ENCODE measurements at regions of chr2 and their contacts with region 1.

Region 1: GRCh38 chr2:11477994-11478393 is 12.0 kb upstream of the E2F6 start:
- DNase-seq: peak; percentile 93
- H3K4me3 Mint-ChIP-seq: no peak overlapping the region
- H3K27ac Mint-ChIP-seq: no peak overlapping the region
- H3K4me1 Mint-ChIP-seq: peaks cover 2% of the 10 kb centered on the region
- H3K27me3 Mint-ChIP-seq: peaks cover 27% of the 10 kb centered on the region
- CTCF ChIP-seq: peak; percentile 77

Region 2: DNA sequence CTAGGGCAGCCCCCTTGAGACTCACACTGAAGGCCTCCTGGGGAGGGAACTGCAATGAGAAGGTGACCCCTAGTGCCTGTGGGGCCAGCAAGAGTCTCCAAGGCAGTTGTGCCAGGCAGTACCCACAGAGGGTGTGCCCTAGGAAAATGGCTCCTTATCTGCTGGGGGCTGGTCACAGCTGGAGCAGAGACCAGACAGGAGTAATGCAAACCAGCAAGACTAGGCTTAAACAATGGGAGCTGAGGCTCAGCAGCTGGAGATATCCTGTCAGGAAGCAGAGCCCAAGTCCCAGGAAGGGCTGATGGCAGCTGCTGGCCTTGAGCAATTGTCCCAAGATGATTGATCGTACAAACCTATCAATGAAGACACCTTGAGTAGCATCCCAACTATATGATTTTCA is 14.7 kb after region 1 on chr2:
- CTCF ChIA-PET with region 1: interaction called, 12 read pairs
- POLR2A ChIA-PET with region 1: no interaction called
- intact Hi-C with region 1: no loop called
- DNase-seq: no peak
- H3K4me3 Mint-ChIP-seq: no peak overlapping the region
- H3K27ac Mint-ChIP-seq: no peak overlapping the region
- H3K4me1 Mint-ChIP-seq: no peaks in the 10 kb centered on the region
- H3K27me3 Mint-ChIP-seq: no peaks in the 10 kb centered on the region
- CTCF ChIP-seq: no peak

Region 3: DNA sequence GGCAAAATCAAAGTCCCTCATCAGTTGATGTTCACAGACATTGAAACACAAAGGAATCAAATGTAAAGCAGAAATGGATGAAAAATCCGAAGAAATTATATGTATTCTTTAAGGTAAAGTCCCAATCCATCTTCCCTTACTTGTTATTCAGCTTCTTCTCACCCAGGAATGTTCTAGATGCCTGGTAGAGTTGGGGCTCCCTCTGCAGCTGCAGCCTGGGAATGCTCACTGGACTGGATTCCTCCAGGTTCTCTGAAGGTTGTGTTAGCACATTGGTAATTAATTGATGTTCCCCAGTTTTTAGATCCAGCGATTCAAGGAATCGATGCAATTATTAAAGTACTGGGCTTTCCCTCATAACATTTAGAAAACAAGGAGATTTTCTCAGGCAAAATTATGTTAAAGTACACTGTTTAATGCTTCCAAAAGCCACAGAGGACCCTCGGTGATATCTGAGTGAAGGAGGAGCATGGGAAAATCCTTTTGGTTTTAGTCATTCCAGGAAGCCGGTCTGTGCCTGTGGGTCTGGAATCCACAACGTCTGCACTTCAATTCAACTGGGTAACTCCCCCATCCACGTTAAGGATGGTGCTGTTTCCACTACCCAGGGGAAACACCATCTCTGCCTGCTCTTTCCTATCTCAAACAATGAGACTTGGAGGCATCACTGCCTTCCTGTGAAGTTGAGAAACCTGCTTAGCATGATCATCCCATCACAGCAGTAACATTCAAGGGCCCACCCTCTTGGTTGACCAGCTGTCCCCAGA is 170.0 kb after region 1 on chr2:
- CTCF ChIA-PET with region 1: interaction called, 3 read pairs
- POLR2A ChIA-PET with region 1: no interaction called
- intact Hi-C with region 1: loop called (anchors 1 kb)
- DNase-seq: peak; percentile 27
- H3K4me3 Mint-ChIP-seq: no peak overlapping the region
- H3K27ac Mint-ChIP-seq: no peak overlapping the region
- H3K4me1 Mint-ChIP-seq: no peaks in the 10 kb centered on the region
- H3K27me3 Mint-ChIP-seq: no peaks in the 10 kb centered on the region
- CTCF ChIP-seq: peak; percentile 24

Region 4: DNA sequence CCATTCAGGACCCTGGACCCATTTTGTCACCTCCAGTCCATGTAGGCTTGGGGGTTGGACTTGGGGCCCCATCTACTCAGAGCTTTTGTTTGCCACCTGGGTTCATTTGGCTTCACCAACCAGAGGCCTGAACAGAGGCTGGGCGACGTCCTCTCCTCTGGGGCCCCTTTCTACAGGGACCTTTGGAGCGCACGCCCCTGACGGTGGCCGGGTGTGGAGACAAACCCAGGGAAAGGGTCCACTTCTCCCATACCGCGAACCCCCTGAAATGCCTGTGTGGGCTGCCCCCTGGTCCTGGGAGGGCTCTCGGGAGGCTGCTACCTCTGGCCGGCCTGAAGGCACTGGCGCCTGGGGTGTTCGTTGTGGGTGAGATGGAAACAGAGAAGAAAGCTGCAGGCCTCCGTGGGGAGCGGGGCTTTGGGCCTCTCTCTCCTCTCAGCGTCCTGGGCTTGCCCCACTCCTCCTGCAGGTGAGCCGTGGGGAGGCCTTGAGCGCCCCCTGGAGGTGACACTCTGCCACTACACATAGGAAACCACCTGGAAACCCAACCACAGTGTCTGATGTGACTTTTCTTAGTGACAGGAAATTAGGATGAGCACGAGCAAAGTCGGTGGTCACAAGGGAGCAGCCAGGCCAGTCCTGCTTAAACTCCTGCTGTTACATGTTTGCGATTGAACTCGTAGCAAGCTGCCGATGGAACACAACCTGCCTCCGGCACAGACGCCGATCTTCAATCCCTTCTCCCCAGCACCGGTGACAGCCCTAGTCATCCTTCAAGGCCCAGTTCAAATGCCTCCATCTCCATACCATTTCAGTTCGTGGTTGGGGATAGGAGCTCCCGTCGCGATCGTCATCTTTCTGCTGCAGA is 204.0 kb after region 1 on chr2:
- CTCF ChIA-PET with region 1: interaction called, 6 read pairs
- POLR2A ChIA-PET with region 1: no interaction called
- intact Hi-C with region 1: loop called (anchors 1 kb)
- DNase-seq: peak; percentile 59
- H3K4me3 Mint-ChIP-seq: no peak overlapping the region
- H3K27ac Mint-ChIP-seq: no peak overlapping the region
- H3K4me1 Mint-ChIP-seq: peaks cover 18% of the 10 kb centered on the region
- H3K27me3 Mint-ChIP-seq: peaks cover 31% of the 10 kb centered on the region
- CTCF ChIP-seq: peak; percentile 96